BJ (cell line): ENCODE measurements at regions of chr5 and their contacts with region 1.

Region 1: DNA sequence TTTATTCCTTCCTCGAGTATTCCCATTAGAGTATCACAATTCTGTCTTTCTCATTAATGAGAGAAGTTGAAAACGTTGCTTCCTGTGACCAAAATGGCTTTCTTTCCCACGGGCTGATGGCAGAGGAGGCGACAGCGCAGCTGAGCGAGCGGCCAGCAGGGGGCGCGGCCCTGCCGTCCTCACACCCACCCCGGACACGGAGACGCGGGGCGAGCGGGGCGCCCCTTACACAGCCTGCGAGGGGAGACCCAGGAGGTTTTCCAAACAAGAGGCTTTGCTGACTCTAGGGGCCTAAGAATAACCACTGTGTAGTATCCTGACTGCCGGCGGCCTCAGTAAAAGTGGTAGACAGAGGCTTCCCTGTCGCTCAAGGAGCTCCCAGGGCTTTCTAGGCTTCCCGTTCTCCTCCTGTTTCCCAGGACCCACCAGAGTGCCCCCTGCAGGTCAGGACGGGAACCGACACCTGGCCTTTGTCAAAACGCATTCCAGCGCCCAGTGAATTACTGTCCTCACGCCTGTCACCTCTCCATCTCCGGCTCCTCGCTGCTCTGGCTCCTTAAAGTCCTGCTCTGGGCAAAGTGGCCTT is 27.3 kb upstream of the FGF1 start:
- DNase-seq: no peak
- H3K4me3 ChIP-seq: peak overlapping the region; percentile 63
- H3K27me3 ChIP-seq: peaks cover 3% of the 10 kb centered on the region
- CTCF ChIP-seq: peak; percentile 76

Region 2: GRCh38 chr5:142605611-142606010 is 107.6 kb before region 1 on chr5:
- CTCF ChIA-PET with region 1: interaction called, 21 read pairs
- POLR2A ChIA-PET with region 1: no interaction called
- DNase-seq: no peak
- H3K4me3 ChIP-seq: no peak overlapping the region
- H3K27me3 ChIP-seq: no peaks in the 10 kb centered on the region
- CTCF ChIP-seq: no peak

Region 3: DNA sequence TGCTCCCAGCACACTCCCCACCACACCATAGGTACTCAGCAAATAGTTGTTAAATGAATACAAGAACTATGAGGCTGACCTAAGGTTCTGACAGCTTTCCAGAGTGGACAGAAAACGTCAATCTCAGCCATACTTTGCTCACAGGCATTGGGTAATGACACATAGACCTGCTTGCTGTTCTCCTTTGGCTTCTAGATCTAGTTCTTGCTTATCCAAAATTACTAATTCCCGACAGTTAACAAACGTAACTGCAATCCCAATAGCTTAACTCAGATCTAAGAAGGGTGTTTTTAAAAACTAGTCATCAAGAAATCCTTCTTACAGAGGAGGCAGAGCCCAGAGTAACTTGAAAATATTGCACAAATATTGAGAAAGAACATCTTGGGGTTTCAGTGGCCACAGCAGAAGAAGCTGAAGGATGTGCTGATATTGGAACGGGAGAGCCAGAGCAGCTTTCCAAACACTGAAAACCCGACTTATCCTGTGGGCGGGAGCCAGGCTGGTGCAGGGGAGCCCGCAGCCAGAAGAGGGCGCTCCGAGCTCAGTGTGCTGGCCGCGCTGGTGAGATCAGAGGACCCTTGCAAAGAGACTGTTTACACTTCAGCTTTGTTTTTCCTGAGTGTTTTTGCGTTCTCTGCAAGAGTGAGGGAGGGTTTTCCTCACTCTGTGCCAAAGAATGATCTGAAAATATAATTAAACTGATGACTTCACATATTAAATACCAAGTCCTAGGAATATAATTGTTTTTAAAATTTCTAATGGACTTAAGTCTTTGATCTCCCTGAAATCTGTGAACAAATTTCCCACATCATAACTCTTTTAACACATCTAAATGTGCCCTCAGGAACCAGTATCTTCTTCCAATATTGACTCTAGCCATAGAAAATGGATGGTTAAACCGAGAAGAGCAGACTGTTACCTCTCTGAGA is 57.6 kb before region 1 on chr5:
- CTCF ChIA-PET with region 1: interaction called, 19 read pairs
- POLR2A ChIA-PET with region 1: no interaction called
- DNase-seq: no peak
- H3K4me3 ChIP-seq: no peak overlapping the region
- H3K27me3 ChIP-seq: no peaks in the 10 kb centered on the region
- CTCF ChIP-seq: peak; percentile 100

Region 4: DNA sequence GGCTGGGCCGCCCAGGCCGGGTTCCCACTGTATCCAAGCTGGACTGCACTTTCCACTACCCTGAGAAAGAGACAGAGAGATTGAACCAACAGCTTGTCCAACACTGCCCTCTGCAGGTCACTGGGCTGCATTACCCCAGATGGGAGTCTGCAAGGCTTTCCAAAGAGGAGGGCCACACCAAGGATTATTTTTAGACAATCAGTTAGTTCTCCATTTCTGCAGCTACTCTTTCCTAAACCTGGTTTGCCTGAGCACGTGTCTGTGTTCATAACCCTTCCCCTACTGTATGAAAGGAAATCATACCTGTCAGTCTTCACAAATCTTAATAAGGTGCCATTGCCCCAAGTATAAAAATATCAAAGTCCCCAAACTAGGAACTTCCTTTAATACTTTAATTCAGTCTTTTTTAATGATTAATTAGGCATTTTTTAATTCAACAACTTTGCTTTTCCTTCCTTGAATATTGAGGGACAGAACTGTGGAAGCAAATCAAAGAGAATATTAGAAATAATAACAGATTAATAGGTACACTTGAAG is 14.0 kb before region 1 on chr5:
- CTCF ChIA-PET with region 1: interaction called, 101 read pairs
- POLR2A ChIA-PET with region 1: no interaction called
- DNase-seq: no peak
- H3K4me3 ChIP-seq: no peak overlapping the region
- H3K27me3 ChIP-seq: no peaks in the 10 kb centered on the region
- CTCF ChIP-seq: peak; percentile 95

Region 5: GRCh38 chr5:142748568-142749249 is 35.5 kb after region 1 on chr5:
- CTCF ChIA-PET with region 1: interaction called, 14 read pairs
- POLR2A ChIA-PET with region 1: no interaction called
- DNase-seq: no peak
- H3K4me3 ChIP-seq: no peak overlapping the region
- H3K27me3 ChIP-seq: no peaks in the 10 kb centered on the region
- CTCF ChIP-seq: 0 out of 2 replicates have a peak, but pooled peaks have one; percentile 18

Region 6: DNA sequence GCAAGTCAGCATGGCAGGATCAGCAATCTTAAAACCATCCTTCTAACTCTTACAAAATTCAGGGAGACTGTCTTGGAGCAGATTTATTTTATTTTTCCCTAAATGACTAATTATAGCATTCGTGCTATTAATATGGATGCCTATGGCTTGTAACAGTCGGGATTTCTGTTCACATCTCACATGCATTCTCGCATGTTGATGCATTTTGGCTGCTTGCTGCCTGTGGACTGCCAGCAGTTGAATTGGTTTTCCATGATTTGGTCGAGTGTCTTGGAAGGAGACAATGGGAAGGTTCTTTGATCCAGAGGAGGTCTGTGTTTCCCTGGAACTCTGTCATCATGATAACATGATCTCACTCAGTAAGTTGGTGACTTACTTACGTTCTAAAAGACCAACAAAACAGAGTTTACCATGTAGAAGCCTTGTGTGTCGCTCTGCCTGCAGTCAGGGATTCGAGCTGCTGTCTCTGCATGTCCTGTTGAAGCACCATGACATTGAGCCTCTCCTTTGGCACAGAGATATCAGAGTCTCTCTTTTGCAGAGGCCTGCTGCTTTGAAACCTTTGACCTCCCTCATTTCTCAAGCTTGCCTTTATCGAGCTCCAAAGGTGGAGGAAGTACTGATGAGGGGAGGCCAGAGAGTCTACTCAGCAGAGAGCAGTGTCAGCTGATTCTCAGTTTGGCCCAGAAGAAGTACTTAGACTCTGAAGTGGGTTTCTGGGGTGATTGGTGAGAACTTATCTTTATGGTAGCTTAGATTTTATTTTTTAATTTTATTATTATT is 139.4 kb after region 1 on chr5:
- CTCF ChIA-PET with region 1: interaction called, 17 read pairs
- POLR2A ChIA-PET with region 1: no interaction called
- DNase-seq: no peak
- H3K4me3 ChIP-seq: no peak overlapping the region
- H3K27me3 ChIP-seq: no peaks in the 10 kb centered on the region
- CTCF ChIP-seq: no peak

Region 7: DNA sequence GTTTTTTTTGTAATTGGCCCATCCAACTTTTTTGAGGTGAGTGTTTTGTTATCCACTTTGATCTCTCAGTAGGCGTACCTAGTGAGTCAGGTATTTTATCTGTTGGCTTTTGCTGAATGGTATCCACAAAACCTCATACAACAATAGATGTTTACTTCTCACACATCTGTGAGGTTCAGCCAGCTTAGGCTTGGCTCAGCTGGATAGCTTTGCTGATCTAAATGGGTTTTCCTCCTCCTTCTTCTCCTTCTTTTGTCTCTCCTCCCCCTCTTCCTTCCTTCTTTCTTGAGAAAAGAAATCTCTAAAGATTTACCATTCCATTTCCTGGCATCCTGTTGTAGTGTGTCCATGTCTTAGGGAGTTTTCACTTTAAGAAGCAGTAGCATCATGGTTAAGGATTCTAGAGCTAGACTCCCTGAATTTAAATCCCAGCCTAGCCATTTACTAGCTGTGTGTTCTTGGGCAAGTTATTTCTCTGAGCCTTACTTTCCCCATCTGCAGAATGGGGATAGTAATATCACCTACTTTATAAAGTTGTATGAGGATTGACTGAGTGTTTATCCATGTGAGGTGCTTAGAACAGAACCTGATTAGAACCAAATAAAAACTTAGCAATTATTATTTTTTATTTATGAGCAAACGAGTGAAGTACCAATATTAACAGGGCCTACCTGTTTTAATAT is 183.3 kb after region 1 on chr5:
- CTCF ChIA-PET with region 1: interaction called, 1,105 read pairs
- POLR2A ChIA-PET with region 1: no interaction called
- DNase-seq: no peak
- H3K4me3 ChIP-seq: no peak overlapping the region
- H3K27me3 ChIP-seq: no peaks in the 10 kb centered on the region; the same call in 1 of the 2 replicates
- CTCF ChIP-seq: no peak

Region 8: GRCh38 chr5:143119291-143119769 is 406.1 kb after region 1 on chr5:
- CTCF ChIA-PET with region 1: no interaction called
- POLR2A ChIA-PET with region 1: no interaction called
- DNase-seq: no peak
- H3K4me3 ChIP-seq: no peak overlapping the region
- H3K27me3 ChIP-seq: no peaks in the 10 kb centered on the region
- CTCF ChIP-seq: no peak